ENCODE measurements at regions of chr16 and their contacts with region 1.

Region 1: GRCh38 chr16:68396481-68396880 is 51.8 kb downstream of the SMPD3 start:
- DNase-seq: no peak
- ATAC-seq: peak; percentile 74
- H3K4me3 ChIP-seq: no peak overlapping the region
- H3K27ac ChIP-seq: no peak overlapping the region
- H3K4me1 ChIP-seq: no peaks in the 10 kb centered on the region
- H3K27me3 ChIP-seq: no peaks in the 10 kb centered on the region
- CTCF ChIP-seq: peak; percentile 47 to 68 (median 63)
- EP300 ChIP-seq: no peak
- POLR2A ChIP-seq: no peak
- RAD21 ChIP-seq: peak; percentile 68

Region 2: GRCh38 chr16:68300736-68301459 is 95.6 kb before region 1 on chr16:
- CTCF ChIA-PET with region 1: no interaction called
- POLR2A ChIA-PET with region 1: no interaction called
- RAD21 ChIA-PET with region 1: no interaction called
- SMC1A ChIA-PET with region 1: no interaction called
- in situ Hi-C with region 1: no loop called
- intact Hi-C with region 1: no loop called
- DNase-seq: no peak
- ATAC-seq: no peak
- H3K4me3 ChIP-seq: no peak overlapping the region
- H3K27ac ChIP-seq: no peak overlapping the region
- H3K4me1 ChIP-seq: no peaks in the 10 kb centered on the region
- H3K27me3 ChIP-seq: no peaks in the 10 kb centered on the region
- CTCF ChIP-seq: no peak
- EP300 ChIP-seq: no peak
- POLR2A ChIP-seq: peak; percentile 45
- RAD21 ChIP-seq: no peak

Region 3: GRCh38 chr16:68382296-68382718 is 14.2 kb before region 1 on chr16:
- CTCF ChIA-PET with region 1: interaction called, 22 read pairs
- POLR2A ChIA-PET with region 1: no interaction called
- RAD21 ChIA-PET with region 1: interaction called, 5 read pairs
- SMC1A ChIA-PET with region 1: interaction called, 7 read pairs
- in situ Hi-C with region 1: no loop called
- intact Hi-C with region 1: no loop called
- DNase-seq: no peak
- ATAC-seq: peak; percentile 88
- H3K4me3 ChIP-seq: no peak overlapping the region
- H3K27ac ChIP-seq: no peak overlapping the region
- H3K4me1 ChIP-seq: peaks cover 10% of the 10 kb centered on the region
- H3K27me3 ChIP-seq: no peaks in the 10 kb centered on the region; a peak in 1 of 4 replicates
- CTCF ChIP-seq: peak in 2 of 3 experiments; percentile 57 to 62; a peak in 4 of 6 replicates
- EP300 ChIP-seq: no peak
- POLR2A ChIP-seq: no peak
- RAD21 ChIP-seq: no peak

Region 4: GRCh38 chr16:68417711-68418301 is 21.3 kb after region 1 on chr16:
- CTCF ChIA-PET with region 1: interaction called, 14 read pairs
- POLR2A ChIA-PET with region 1: interaction called, 4 read pairs
- RAD21 ChIA-PET with region 1: interaction called, 7 read pairs
- SMC1A ChIA-PET with region 1: interaction called, 6 read pairs
- in situ Hi-C with region 1: no loop called
- intact Hi-C with region 1: no loop called
- DNase-seq: peak; percentile 73
- ATAC-seq: peak; percentile 93
- H3K4me3 ChIP-seq: peak overlapping the region; percentile 16; the same call in 1 of the 2 replicates
- H3K27ac ChIP-seq: peak overlapping the region; percentile 70
- H3K4me1 ChIP-seq: peaks cover 25% of the 10 kb centered on the region
- H3K27me3 ChIP-seq: no peaks in the 10 kb centered on the region
- CTCF ChIP-seq: no peak
- EP300 ChIP-seq: no peak
- POLR2A ChIP-seq: peak; percentile 24; the same call in 1 of the 2 replicates
- RAD21 ChIP-seq: no peak

Region 5: DNA sequence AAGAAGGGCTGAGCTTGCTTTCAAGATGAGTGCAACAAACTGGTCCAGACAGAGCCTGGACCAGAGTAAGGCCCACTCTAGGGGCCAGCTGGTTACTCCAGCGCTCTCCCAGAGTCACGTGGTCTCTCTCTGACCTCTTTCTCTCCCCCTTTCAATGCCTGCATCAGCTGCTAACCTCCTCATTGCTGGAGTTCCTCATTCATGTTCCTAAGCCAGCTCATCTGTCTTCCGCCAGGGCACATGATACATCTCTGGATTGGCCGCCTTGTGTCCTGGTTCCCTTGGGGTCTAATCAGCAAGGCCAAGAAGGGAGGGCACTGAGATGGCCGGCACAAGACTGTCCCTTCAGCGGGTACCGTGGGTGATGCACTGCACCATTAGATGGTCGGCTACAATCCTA is 115.7 kb after region 1 on chr16:
- CTCF ChIA-PET with region 1: interaction called, 41 read pairs
- POLR2A ChIA-PET with region 1: no interaction called
- RAD21 ChIA-PET with region 1: interaction called, 6 read pairs
- SMC1A ChIA-PET with region 1: interaction called, 22 read pairs
- in situ Hi-C with region 1: no loop called
- intact Hi-C with region 1: loop called (anchors 1 kb)
- DNase-seq: no peak
- ATAC-seq: no peak
- H3K4me3 ChIP-seq: no peak overlapping the region
- H3K27ac ChIP-seq: no peak overlapping the region
- H3K4me1 ChIP-seq: no peaks in the 10 kb centered on the region
- H3K27me3 ChIP-seq: no peaks in the 10 kb centered on the region; a peak in 2 of 4 replicates
- CTCF ChIP-seq: no peak
- EP300 ChIP-seq: no peak
- POLR2A ChIP-seq: no peak
- RAD21 ChIP-seq: no peak

Measured in GM12878 (cell line).